B cell (primary cell): ENCODE measurements at regions of chr11 and their contacts with region 1.

Region 1: GRCh38 chr11:35305670-35306382 is 113.5 kb downstream of the SLC1A2 start:
- DNase-seq: peak; percentile 52
- ATAC-seq: peak; percentile 41
- H3K4me3 ChIP-seq: peak overlapping the region in 1 of 5 experiments; percentile 7
- H3K4me3 Mint-ChIP-seq: peak overlapping the region; percentile 27
- H3K27ac ChIP-seq: no peak overlapping the region
- H3K27ac Mint-ChIP-seq: no peak overlapping the region
- H3K4me1 ChIP-seq: peaks cover 6 to 9% of the 10 kb centered on the region in 2 donors
- H3K4me1 Mint-ChIP-seq: peaks cover 12% of the 10 kb centered on the region
- H3K27me3 ChIP-seq: no peaks in the 10 kb centered on the region
- H3K27me3 Mint-ChIP-seq: no peaks in the 10 kb centered on the region
- CTCF ChIP-seq: peak; percentile 54

Region 2: GRCh38 chr11:35006389-35007128 is 299.3 kb before region 1 on chr11:
- CTCF ChIA-PET with region 1: interaction called, 10 read pairs
- POLR2A ChIA-PET with region 1: no interaction called
- intact Hi-C with region 1: no loop called
- DNase-seq: peak; percentile 63
- ATAC-seq: peak; percentile 89
- H3K4me3 ChIP-seq: no peak overlapping the region
- H3K4me3 Mint-ChIP-seq: no peak overlapping the region
- H3K27ac ChIP-seq: no peak overlapping the region
- H3K27ac Mint-ChIP-seq: peak overlapping the region; percentile 50
- H3K4me1 ChIP-seq: peaks cover 6 to 10% of the 10 kb centered on the region in 2 donors
- H3K4me1 Mint-ChIP-seq: peaks cover 31% of the 10 kb centered on the region
- H3K27me3 ChIP-seq: no peaks in the 10 kb centered on the region
- H3K27me3 Mint-ChIP-seq: no peaks in the 10 kb centered on the region
- CTCF ChIP-seq: no peak

Region 3: GRCh38 chr11:35100013-35100383 is 205.8 kb before region 1 on chr11:
- CTCF ChIA-PET with region 1: no interaction called
- POLR2A ChIA-PET with region 1: no interaction called
- intact Hi-C with region 1: no loop called
- DNase-seq: no peak
- ATAC-seq: no peak
- H3K4me3 ChIP-seq: no peak overlapping the region
- H3K4me3 Mint-ChIP-seq: no peak overlapping the region
- H3K27ac ChIP-seq: no peak overlapping the region
- H3K27ac Mint-ChIP-seq: no peak overlapping the region
- H3K4me1 ChIP-seq: no peaks in the 10 kb centered on the region
- H3K4me1 Mint-ChIP-seq: peaks cover 13% of the 10 kb centered on the region
- H3K27me3 ChIP-seq: no peaks in the 10 kb centered on the region
- H3K27me3 Mint-ChIP-seq: no peaks in the 10 kb centered on the region
- CTCF ChIP-seq: no peak

Region 4: GRCh38 chr11:35318977-35319925 is 13.4 kb after region 1 on chr11:
- CTCF ChIA-PET with region 1: interaction called, 12 read pairs
- POLR2A ChIA-PET with region 1: no interaction called
- intact Hi-C with region 1: no loop called
- DNase-seq: no peak
- ATAC-seq: no peak
- H3K4me3 ChIP-seq: no peak overlapping the region
- H3K4me3 Mint-ChIP-seq: peak overlapping the region; percentile 40
- H3K27ac ChIP-seq: peak overlapping the region in 1 of 2 donors; percentile 67
- H3K27ac Mint-ChIP-seq: peak overlapping the region; percentile 50
- H3K4me1 ChIP-seq: peaks cover 25 to 41% of the 10 kb centered on the region in 2 donors
- H3K4me1 Mint-ChIP-seq: peaks cover 39% of the 10 kb centered on the region
- H3K27me3 ChIP-seq: no peaks in the 10 kb centered on the region
- H3K27me3 Mint-ChIP-seq: no peaks in the 10 kb centered on the region
- CTCF ChIP-seq: no peak

Region 5: DNA sequence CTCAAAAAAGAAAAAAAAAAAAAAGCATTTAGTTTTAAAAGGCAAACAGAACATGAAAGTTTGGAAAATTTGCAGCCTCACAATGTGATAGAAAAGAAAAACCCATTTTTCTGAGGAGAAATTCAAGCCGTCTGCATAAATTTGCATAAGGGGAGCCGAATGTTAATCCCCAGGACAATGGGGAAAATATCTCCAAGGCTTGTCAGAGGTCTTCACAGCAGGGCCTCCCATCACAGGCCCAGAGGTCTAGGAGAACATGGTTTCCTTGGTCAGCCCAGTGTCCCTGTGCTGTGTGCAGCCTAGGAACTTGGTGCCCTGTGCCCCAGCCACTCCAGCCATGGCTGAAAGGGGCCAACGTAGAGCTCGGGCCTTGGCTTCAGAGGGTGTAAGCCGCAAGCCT is 465.9 kb after region 1 on chr11:
- CTCF ChIA-PET with region 1: no interaction called
- POLR2A ChIA-PET with region 1: no interaction called
- intact Hi-C with region 1: no loop called
- DNase-seq: no peak
- ATAC-seq: no peak
- H3K4me3 ChIP-seq: no peak overlapping the region
- H3K4me3 Mint-ChIP-seq: no peak overlapping the region
- H3K27ac ChIP-seq: no peak overlapping the region
- H3K27ac Mint-ChIP-seq: no peak overlapping the region
- H3K4me1 ChIP-seq: no peaks in the 10 kb centered on the region
- H3K4me1 Mint-ChIP-seq: peaks cover 18% of the 10 kb centered on the region
- H3K27me3 ChIP-seq: no peaks in the 10 kb centered on the region
- H3K27me3 Mint-ChIP-seq: no peaks in the 10 kb centered on the region
- CTCF ChIP-seq: no peak